ENCODE measurements at regions of chr6 and their contacts with region 1.

Region 1: GRCh38 chr6:112087136-112087911 is at the starts of genes FAM229B and TUBE1:
- DNase-seq: peak; percentile 96
- ATAC-seq: peak; percentile 97
- H3K4me3 ChIP-seq: peak within 1 kb of the TSS; percentile 69 to 88 (median 83)
- H3K4me3 Mint-ChIP-seq: no peak within 1 kb of the TSS
- H3K27ac ChIP-seq: peak within 1 kb of the TSS; percentile 84
- H3K27ac Mint-ChIP-seq: no peak within 1 kb of the TSS
- H3K4me1 ChIP-seq: peaks cover 7 to 8% of the 10 kb centered on the region in 2 donors
- H3K4me1 Mint-ChIP-seq: no peaks in the 10 kb centered on the region
- H3K27me3 ChIP-seq: peaks cover 0 to 14% (median 5%) of the 10 kb centered on the region in 4 experiments
- H3K27me3 Mint-ChIP-seq: peaks cover 15% of the 10 kb centered on the region
- CTCF ChIP-seq: no peak
- total RNA-seq, gene FAM229B: 4.0 and 4.4 TPM in 2 replicates
- total RNA-seq, gene TUBE1: 24.5 and 26.7 TPM in 2 replicates

Region 2: DNA sequence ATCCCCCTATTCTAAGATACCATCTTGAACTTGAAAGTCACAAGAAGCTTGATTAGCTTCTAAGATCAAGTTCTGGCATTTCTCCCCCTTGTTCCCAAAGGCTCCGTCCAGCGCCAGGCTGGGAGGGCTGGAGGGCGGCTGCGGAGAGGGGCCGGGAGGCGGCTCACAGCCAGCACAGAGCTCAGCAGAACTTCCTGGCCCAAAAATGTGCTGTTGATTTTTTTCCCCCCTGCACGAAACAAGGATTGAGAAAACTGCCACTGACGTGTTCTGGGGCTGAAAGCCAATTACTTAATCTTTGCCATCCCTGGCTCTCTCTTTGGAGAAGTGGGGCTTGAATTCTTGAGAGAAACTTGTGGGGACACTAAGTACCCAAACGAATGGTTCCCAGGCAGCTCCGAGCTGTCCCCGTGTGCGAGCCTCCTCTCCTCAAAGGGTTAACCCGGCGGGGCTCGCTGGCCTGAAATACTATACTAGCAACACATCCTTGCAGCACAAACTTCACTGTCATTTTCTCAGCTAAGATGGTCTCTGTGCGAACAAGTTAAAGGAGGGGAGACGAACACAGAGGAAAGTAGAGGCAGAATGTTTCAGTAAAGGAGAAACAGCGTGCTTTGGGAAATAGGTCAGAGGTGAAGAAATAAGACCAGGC is 482.1 kb before region 1 on chr6:
- CTCF ChIA-PET with region 1: no interaction called
- POLR2A ChIA-PET with region 1: no interaction called
- intact Hi-C with region 1: loop called (anchors 5 kb)
- DNase-seq: no peak
- ATAC-seq: peak; percentile 46
- H3K4me3 ChIP-seq: peak overlapping the region; percentile 60 to 89 (median 82)
- H3K4me3 Mint-ChIP-seq: peak overlapping the region; percentile 93
- H3K27ac ChIP-seq: peak overlapping the region; percentile 76 to 78
- H3K27ac Mint-ChIP-seq: peak overlapping the region; percentile 89
- H3K4me1 ChIP-seq: peaks cover 22 to 25% of the 10 kb centered on the region in 2 donors
- H3K4me1 Mint-ChIP-seq: peaks cover 44% of the 10 kb centered on the region
- H3K27me3 ChIP-seq: no peaks in the 10 kb centered on the region
- H3K27me3 Mint-ChIP-seq: no peaks in the 10 kb centered on the region
- CTCF ChIP-seq: no peak

Region 3: GRCh38 chr6:112163295-112164257 is 76.3 kb after region 1 on chr6:
- CTCF ChIA-PET with region 1: interaction called, 52 read pairs
- POLR2A ChIA-PET with region 1: no interaction called
- intact Hi-C with region 1: loop called (anchors 1 kb)
- DNase-seq: peak; percentile 75
- ATAC-seq: peak; percentile 96
- H3K4me3 ChIP-seq: no peak overlapping the region
- H3K4me3 Mint-ChIP-seq: no peak overlapping the region
- H3K27ac ChIP-seq: no peak overlapping the region
- H3K27ac Mint-ChIP-seq: no peak overlapping the region
- H3K4me1 ChIP-seq: peaks cover 9% of the 10 kb centered on the region in 2 donors
- H3K4me1 Mint-ChIP-seq: peaks cover 12% of the 10 kb centered on the region
- H3K27me3 ChIP-seq: peaks cover 0 to 22% (median 13%) of the 10 kb centered on the region in 4 experiments
- H3K27me3 Mint-ChIP-seq: peaks cover 53% of the 10 kb centered on the region
- CTCF ChIP-seq: peak; percentile 99

Region 4: DNA sequence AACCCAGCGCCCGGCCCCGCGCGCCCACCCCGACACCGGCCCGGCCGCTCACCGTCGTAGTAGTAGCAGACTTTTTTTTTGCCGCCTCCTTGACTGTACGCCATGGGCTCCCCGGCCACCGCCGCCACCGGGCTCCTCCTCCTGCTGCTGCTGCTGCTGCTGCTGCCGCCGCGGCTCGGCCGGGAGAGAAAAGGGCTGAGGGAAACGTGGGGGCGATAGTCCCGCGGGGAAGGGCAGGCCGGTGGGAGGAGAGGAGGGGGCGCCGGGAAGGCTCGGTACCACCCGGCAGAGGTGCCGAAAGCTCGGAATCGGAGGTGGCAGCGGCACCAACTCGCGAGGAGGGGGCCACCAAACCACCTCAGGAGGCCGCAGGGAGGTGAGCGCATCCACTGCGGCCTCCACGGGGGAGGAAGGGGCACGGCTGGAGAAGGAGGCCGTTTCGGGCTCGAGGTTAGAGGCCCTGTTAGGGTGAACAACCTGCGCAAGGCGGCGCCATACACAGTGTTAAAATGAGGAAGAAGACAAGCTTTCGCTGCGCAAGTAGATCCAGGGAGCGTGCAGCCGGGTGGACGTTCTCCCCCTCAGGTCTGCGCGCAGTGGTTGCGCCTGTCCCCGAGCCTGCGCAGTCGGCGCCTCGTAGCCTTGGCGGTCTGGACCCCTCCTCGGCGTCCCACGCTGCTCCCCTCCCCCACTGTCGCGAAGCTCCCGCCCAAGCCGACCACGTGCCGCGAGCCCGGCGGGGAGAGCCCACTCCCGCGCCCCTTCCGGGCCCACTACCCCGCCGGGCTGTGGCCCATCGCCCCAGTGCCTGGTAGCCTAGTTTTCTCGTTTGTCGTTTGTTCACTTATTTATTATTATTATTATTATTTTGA is 1883.7 kb after region 1 on chr6 and contains the start of gene HDAC2:
- CTCF ChIA-PET with region 1: no interaction called
- POLR2A ChIA-PET with region 1: no interaction called
- intact Hi-C with region 1: loop called (anchors 2 kb)
- DNase-seq: peak; percentile 94
- ATAC-seq: peak; percentile 83
- H3K4me3 ChIP-seq: peak within 1 kb of the TSS; percentile 53 to 99 (median 86)
- H3K4me3 Mint-ChIP-seq: peak within 1 kb of the TSS; percentile 100
- H3K27ac ChIP-seq: peak within 1 kb of the TSS; percentile 91 to 92
- H3K27ac Mint-ChIP-seq: peak within 1 kb of the TSS; percentile 99
- H3K4me1 ChIP-seq: peaks cover 19 to 24% of the 10 kb centered on the region in 2 donors
- H3K4me1 Mint-ChIP-seq: peaks cover 43% of the 10 kb centered on the region
- H3K27me3 ChIP-seq: no peaks in the 10 kb centered on the region
- H3K27me3 Mint-ChIP-seq: no peaks in the 10 kb centered on the region
- CTCF ChIP-seq: peak; percentile 18
- total RNA-seq, gene HDAC2: 52.7 and 58.3 TPM in 2 replicates